ENCODE measurements at regions of chr7 and their contacts with region 1.

Region 1: GRCh38 chr7:4883374-4884144 is at the start of gene RADIL:
- DNase-seq: peak; percentile 89
- H3K4me3 ChIP-seq: peak within 1 kb of the TSS; percentile 3 to 46 (median 9)
- H3K27ac ChIP-seq: no peak within 1 kb of the TSS
- H3K4me1 ChIP-seq: peaks cover 8% of the 10 kb centered on the region
- H3K27me3 ChIP-seq: no peaks in the 10 kb centered on the region
- CTCF ChIP-seq: peak; percentile 80 to 92
- POLR2A ChIP-seq: no peak
- total RNA-seq, gene RADIL: 1.0 and 2.5 TPM in 2 replicates

Region 2: DNA sequence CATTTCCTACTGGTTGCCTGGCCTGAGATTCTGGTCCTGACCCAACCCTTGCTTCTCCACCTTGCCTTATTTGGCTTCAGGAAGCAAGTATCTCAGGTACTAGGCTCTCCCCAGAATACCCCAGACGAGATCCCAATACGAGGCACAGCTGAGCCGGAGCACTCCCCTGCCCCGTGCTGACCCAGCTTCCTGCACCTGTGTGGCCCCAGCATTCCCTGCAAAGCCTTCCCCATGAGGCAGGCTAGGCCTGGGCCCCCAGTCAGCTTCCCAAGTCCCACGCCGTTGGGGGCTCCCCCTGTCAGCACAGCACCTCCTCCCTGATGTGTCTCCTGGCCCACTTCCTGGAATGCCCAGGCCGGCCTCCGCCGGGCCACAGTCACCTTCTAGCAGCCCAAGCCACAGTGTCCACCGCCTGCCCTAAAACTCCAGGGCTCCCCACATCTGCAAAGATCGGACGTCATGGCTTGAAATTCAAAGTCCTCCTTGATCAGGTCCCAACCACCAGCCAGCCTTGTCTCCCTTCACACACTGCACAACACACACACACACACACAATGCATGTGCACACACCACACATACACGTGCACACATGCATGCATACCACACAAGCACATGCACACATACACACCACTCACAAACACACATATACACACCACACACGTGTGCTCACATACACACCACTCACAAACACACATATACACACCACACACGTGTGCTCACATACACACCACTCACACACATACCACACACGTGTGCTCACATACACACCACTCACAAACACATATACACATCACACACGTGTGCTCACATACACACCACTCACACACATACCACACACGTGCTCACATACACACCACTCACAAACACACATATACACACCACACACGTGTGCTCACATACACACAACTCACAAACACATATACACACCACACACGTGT is 280.4 kb before region 1 on chr7:
- CTCF ChIA-PET with region 1: no interaction called
- POLR2A ChIA-PET with region 1: no interaction called
- dilution Hi-C with region 1: no loop called
- intact Hi-C with region 1: no loop called
- DNase-seq: no peak
- H3K4me3 ChIP-seq: no peak overlapping the region
- H3K27ac ChIP-seq: no peak overlapping the region
- H3K4me1 ChIP-seq: no peaks in the 10 kb centered on the region
- H3K27me3 ChIP-seq: no peaks in the 10 kb centered on the region
- CTCF ChIP-seq: no peak
- POLR2A ChIP-seq: no peak

Region 3: GRCh38 chr7:5083311-5083711 is 199.8 kb after region 1 on chr7:
- CTCF ChIA-PET with region 1: interaction called, 4 read pairs
- POLR2A ChIA-PET with region 1: no interaction called
- dilution Hi-C with region 1: no loop called
- intact Hi-C with region 1: loop called (anchors 1 kb)
- DNase-seq: no peak
- H3K4me3 ChIP-seq: no peak overlapping the region
- H3K27ac ChIP-seq: no peak overlapping the region
- H3K4me1 ChIP-seq: no peaks in the 10 kb centered on the region
- H3K27me3 ChIP-seq: no peaks in the 10 kb centered on the region
- CTCF ChIP-seq: no peak
- POLR2A ChIP-seq: no peak